GM12878 (cell line): ENCODE measurements at regions of chr16 and their contacts with region 1.

Region 1: DNA sequence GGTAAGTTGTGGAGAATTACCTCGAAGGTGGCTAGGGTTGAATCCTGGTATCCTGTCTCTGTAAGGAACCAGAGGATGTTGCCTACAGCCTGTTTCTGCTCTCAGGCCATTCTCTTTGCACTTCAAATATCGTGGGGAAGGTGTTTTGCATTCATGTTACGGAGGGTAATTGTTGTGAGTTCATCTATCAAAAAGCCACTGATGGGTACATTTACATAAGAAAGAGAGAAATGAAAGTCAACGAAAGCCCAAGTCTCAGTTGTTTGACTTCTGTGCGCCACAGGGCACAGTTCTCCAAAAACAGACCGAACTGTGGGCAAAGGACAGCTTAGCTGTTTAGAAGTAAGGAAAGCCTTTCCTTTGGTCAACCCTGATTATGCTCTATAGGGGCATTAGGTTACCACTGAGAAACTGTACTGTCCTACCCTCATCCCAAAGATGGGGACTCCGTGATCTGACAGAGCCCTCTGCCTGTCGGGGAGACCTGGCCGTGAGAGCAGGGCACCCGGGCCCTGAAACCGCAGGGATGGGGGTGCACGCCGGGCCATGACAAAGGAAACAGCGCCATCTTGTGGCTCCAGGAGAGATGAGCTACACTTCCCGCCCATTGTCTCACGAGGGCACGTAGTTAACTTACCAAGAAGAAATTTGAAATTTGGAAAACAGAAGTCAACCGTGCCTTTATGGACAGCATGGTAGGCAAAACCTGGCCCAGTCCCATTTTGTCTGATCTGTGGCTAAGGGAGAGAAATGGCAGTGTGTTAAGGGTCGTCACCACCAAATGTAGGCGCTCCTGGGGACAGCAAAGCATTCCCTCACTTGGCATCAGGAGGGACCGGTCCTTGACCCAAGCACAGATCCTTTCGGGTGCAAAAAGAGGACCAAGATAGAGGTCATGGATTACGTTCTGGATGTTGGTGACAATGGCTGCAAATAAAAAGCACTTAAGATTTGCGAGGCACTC is 74.5 kb upstream of the DYNLRB2 start:
- DNase-seq: peak; percentile 34
- ATAC-seq: peak; percentile 93
- H3K4me3 ChIP-seq: no peak overlapping the region
- H3K27ac ChIP-seq: no peak overlapping the region
- H3K4me1 ChIP-seq: no peaks in the 10 kb centered on the region
- H3K27me3 ChIP-seq: no peaks in the 10 kb centered on the region; a peak in 1 of 4 replicates
- CTCF ChIP-seq: peak; percentile 73 to 82 (median 76)
- EP300 ChIP-seq: no peak
- POLR2A ChIP-seq: no peak
- RAD21 ChIP-seq: peak; percentile 80

Region 2: GRCh38 chr16:79997257-79997656 is 469.0 kb before region 1 on chr16:
- CTCF ChIA-PET with region 1: interaction called, 21 read pairs
- POLR2A ChIA-PET with region 1: no interaction called
- RAD21 ChIA-PET with region 1: interaction called, 6 read pairs
- SMC1A ChIA-PET with region 1: interaction called, 4 read pairs
- in situ Hi-C with region 1: no loop called
- intact Hi-C with region 1: loop called (anchors 1 kb)
- DNase-seq: no peak
- ATAC-seq: no peak
- H3K4me3 ChIP-seq: no peak overlapping the region
- H3K27ac ChIP-seq: no peak overlapping the region
- H3K4me1 ChIP-seq: no peaks in the 10 kb centered on the region
- H3K27me3 ChIP-seq: no peaks in the 10 kb centered on the region
- CTCF ChIP-seq: peak; percentile 25 to 35 (median 27); a peak in 3 of 6 replicates
- EP300 ChIP-seq: no peak
- POLR2A ChIP-seq: no peak
- RAD21 ChIP-seq: peak; percentile 45

Region 3: DNA sequence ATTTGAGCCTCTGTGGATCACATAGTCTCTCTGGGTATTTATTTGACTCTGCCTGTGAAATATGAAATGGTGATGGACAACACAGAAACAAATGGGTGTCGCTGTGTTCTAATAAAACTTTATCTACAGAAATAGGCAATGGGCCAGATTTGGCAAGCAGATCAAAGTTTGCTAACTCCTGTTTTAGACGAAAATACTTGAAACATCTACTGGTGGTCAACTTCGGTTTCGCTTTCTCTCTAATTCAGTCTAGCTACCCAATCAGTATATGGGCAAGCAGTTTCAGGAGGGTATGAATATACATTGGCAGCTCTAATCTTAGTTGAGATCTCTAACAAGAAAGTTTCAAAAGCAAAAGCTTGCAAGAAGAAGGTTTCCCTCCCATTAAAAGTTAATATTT is 14.4 kb after region 1 on chr16:
- CTCF ChIA-PET with region 1: interaction called, 20 read pairs
- POLR2A ChIA-PET with region 1: no interaction called
- RAD21 ChIA-PET with region 1: interaction called, 4 read pairs
- SMC1A ChIA-PET with region 1: no interaction called
- in situ Hi-C with region 1: no loop called
- intact Hi-C with region 1: no loop called
- DNase-seq: peak; percentile 46
- ATAC-seq: peak; percentile 84
- H3K4me3 ChIP-seq: no peak overlapping the region
- H3K27ac ChIP-seq: no peak overlapping the region
- H3K4me1 ChIP-seq: no peaks in the 10 kb centered on the region
- H3K27me3 ChIP-seq: no peaks in the 10 kb centered on the region
- CTCF ChIP-seq: no peak
- EP300 ChIP-seq: no peak
- POLR2A ChIP-seq: no peak
- RAD21 ChIP-seq: no peak